ENCODE measurements at regions of chr4 and their contacts with region 1.

Region 1: DNA sequence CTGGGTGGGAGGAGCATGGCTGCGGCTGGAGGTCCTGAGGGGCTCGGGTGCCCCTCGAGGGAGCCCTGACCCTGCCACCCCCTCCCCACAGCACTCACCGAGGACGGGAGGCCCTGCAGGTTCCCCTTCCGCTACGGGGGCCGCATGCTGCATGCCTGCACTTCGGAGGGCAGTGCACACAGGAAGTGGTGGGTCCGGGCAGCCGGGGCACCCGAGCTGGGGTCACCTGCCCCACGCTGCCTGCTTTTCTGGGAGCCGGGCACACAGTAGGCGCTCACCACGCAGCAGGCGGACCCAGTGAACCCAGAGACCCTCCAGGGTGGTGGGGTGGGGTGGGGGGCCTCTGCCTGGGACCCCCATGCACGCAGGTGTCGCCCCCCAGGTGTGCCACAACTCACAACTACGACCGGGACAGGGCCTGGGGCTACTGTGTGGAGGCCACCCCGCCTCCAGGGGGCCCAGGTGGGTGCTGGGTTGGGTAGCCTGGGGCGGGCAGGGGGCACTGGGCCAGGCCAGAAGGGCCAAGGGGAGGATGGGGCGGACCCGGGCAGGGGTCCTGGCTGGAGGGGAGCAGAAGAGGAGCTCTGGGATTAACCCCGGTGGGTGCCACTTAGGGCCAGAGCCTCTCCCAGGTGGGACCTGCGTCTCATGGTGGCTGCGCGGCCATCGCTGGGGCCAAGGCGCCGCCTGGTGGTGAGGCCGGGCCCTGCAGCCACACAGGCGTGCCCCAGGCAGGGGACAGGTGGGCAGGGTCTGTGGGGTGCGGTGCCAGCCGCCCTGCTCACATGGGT is 1.4 kb downstream of the HGFAC start:
- DNase-seq: no peak
- H3K4me3 ChIP-seq: no peak overlapping the region
- H3K27ac ChIP-seq: no peak overlapping the region
- H3K4me1 ChIP-seq: peaks cover 0 to 12% (median 8%) of the 10 kb centered on the region in 4 donors
- H3K27me3 ChIP-seq: peaks cover 0 to 18% (median 0%) of the 10 kb centered on the region in 4 donors
- CTCF ChIP-seq: peak in 2 of 3 experiments; percentile 91 to 98
- EP300 ChIP-seq: no peak
- POLR2A ChIP-seq: no peak

Region 2: GRCh38 chr4:3193531-3194203 is 249.5 kb before region 1 on chr4:
- intact Hi-C with region 1: loop called (anchors 5 kb)
- DNase-seq: no peak
- H3K4me3 ChIP-seq: no peak overlapping the region
- H3K27ac ChIP-seq: no peak overlapping the region
- H3K4me1 ChIP-seq: peaks cover 0 to 11% (median 7%) of the 10 kb centered on the region in 4 donors
- H3K27me3 ChIP-seq: no peaks in the 10 kb centered on the region
- CTCF ChIP-seq: peak; percentile 28 to 44 (median 38)
- EP300 ChIP-seq: no peak
- POLR2A ChIP-seq: no peak

Region 3: DNA sequence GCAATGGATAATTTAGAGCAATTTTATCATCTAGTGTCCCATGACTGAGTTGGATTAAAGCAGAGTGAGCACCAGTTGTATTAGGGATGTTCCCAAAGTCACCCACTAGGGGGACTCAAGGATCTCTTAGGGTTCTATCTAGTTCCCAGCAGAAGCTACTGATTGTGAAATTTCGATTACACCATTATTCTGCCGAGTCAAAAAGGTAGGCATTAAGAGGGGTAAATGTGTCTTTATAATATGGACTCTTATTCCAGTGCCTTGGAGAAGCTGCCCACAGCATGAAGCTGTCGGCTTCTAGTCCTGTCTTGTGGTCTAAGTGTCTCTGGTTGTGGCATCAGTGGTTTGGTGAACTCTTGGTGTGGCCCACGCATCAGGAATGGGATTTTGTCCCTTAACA is 97.0 kb before region 1 on chr4:
- intact Hi-C with region 1: loop called (anchors 1 kb)
- DNase-seq: no peak
- H3K4me3 ChIP-seq: no peak overlapping the region
- H3K27ac ChIP-seq: no peak overlapping the region
- H3K4me1 ChIP-seq: peaks cover 10 to 26% (median 17%) of the 10 kb centered on the region in 4 donors
- H3K27me3 ChIP-seq: no peaks in the 10 kb centered on the region
- CTCF ChIP-seq: peak; percentile 83 to 88 (median 87)
- EP300 ChIP-seq: no peak
- POLR2A ChIP-seq: no peak

Region 4: GRCh38 chr4:3703677-3704521 is 260.7 kb after region 1 on chr4:
- intact Hi-C with region 1: no loop called
- DNase-seq: no peak
- H3K4me3 ChIP-seq: no peak overlapping the region
- H3K27ac ChIP-seq: no peak overlapping the region
- H3K4me1 ChIP-seq: no peaks in the 10 kb centered on the region
- H3K27me3 ChIP-seq: peaks cover 0 to 95% (median 4%) of the 10 kb centered on the region in 4 donors
- CTCF ChIP-seq: no peak
- EP300 ChIP-seq: no peak
- POLR2A ChIP-seq: no peak

Measured in esophagus muscularis mucosa (tissue), 4 donors.